ENCODE measurements at regions of chr6 and their contacts with region 1.

Region 1: GRCh38 chr6:6057424-6058053 is 50.8 kb upstream of the NRN1 start:
- DNase-seq: no peak
- ATAC-seq: peak; percentile 79

Region 2: GRCh38 chr6:5746053-5746758 is 311.3 kb before region 1 on chr6:
- intact Hi-C with region 1: no loop called
- DNase-seq: no peak
- ATAC-seq: peak; percentile 61

Region 3: DNA sequence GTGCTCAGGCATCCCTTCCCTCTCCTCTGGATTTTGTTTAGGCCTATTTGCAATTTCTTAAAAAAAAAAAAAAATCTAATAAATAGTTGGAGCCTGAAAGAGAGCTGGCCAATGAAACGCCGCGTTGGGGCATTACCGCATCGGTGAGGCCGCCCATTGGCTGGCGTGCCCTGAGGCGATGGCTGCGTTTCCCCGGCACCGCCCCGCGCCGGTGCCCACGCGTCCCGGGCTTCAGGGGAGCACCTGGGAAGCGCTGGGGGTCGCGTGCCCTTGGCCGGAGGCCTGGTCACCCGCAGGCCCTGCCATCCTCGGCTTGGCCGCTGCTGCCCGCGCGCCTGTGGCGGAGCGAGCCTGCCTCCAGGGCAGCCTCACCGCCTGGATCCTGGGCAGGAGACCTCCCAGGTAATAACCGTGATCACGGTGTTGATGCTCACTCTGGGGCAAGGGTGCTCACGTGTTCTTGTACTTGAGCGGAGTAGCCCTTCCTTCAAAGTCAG is 206.2 kb before region 1 on chr6:
- intact Hi-C with region 1: no loop called
- DNase-seq: peak; percentile 72
- ATAC-seq: peak; percentile 95

Region 4: GRCh38 chr6:5979650-5980420 is 77.7 kb before region 1 on chr6:
- intact Hi-C with region 1: no loop called
- DNase-seq: no peak
- ATAC-seq: peak; percentile 49

Region 5: DNA sequence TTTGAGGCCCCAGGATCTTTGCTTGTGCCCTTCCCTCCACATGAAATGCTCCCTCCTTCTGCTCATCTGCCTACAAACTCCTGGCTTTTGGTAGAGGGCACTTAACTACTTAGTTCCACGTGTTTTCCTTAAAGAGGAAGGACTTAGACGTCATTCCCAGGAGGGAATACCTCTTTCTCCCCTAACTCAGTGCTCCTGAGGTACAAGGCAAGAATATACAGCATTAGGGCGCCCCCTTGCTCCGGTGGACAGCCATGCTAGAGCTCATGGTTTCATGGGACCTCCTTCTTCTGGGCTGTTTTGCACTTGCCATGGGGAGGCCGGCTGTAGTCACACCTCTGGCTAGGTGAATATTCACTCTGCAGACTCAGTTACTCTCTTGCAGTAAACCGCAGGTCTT is 437.1 kb after region 1 on chr6:
- intact Hi-C with region 1: loop called (anchors 5 kb)
- DNase-seq: peak; percentile 80
- ATAC-seq: peak; percentile 85

Region 6: GRCh38 chr6:6547110-6547879 is 489.8 kb after region 1 on chr6:
- intact Hi-C with region 1: loop called (anchors 1 kb)
- DNase-seq: peak; percentile 90
- ATAC-seq: peak; percentile 97

Measured in Right ventricle myocardium superior (tissue), 1 donor.